ENCODE measurements at regions of chr2 and their contacts with region 1.

Region 1: DNA sequence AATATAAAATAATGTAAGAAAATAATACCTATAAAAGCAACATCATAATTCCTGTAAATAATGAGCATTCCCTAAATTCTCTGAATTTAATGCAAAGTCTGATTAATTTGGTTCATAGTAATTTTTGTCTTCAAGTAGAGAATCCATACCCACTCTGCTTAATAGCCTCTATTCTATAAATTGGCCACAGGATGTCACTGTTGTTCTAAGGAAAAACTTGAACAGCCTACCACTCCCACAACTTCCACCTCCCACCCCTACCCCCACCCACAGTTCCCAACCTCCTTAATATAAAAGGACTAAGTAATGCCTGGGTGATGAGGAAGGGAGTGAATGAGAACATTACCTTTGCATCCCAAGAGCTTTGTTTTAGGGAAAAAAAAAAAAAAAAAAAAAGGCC is 27.2 kb upstream of the BBS5 start:
- DNase-seq: peak; percentile 39
- H3K4me3 ChIP-seq: no peak overlapping the region
- H3K27ac ChIP-seq: no peak overlapping the region
- H3K4me1 ChIP-seq: no peaks in the 10 kb centered on the region
- H3K27me3 ChIP-seq: no peaks in the 10 kb centered on the region
- CTCF ChIP-seq: peak in 1 of 2 donors; percentile 22
- POLR2A ChIP-seq: no peak

Region 2: DNA sequence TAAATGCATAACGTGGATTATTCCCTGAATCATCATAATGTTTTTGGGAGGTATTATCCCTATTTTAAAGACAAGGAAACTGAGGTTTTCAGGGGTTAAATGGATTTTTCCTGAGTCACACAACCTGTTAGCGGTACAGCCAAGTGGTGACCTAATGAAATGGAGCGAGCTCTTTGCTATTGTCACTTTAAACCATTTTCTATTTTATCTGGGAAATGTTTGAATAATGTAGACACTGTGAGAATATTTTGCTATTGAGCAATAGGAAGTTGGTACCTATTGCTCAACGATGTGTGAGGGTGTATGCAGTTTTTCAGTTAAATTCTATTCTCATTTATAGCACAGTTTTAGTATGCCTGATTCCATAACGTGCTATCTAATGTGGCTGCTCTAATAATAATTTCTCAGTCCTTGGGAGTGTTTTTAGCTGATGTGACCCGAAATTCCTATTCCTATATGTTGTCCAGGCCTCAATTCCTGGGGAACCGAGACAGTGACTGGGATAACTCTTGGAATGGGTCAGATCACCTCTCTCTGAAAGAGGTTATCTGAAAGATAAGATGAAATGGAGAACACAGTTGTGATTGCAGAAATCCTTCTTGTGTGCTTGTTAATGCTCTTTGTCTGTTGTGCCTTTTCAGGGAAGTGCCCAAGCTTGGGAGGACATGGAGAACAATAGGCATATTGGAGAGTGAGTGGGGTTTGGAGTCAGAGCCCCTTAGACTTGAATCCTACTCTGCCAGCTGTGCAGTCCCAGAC is 459.3 kb before region 1 on chr2:
- CTCF ChIA-PET with region 1: no interaction called
- POLR2A ChIA-PET with region 1: no interaction called
- dilution Hi-C with region 1: no loop called
- intact Hi-C with region 1: no loop called
- DNase-seq: peak; percentile 73
- H3K4me3 ChIP-seq: no peak overlapping the region
- H3K27ac ChIP-seq: peak overlapping the region; percentile 90
- H3K4me1 ChIP-seq: peaks cover 63% of the 10 kb centered on the region
- H3K27me3 ChIP-seq: no peaks in the 10 kb centered on the region
- CTCF ChIP-seq: no peak
- POLR2A ChIP-seq: no peak

Region 3: DNA sequence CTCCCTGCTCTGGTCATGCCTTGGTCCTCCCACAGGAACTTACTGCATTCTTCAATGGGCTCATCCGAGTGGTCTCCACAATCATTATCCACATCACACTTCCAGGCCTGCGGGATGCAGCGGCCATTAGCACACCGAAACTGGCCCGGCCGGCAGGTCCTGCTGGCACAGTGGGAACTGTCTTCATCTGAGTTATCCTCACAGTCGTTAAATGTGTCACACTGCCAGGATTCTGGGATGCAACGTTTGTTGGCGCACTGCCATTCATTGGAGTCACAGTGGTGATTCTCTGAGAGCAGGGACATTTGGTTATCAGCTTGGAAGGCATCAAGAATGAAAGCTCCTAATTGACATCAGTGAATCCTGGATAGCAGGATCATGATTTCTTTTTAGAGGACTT is 278.2 kb before region 1 on chr2:
- CTCF ChIA-PET with region 1: no interaction called
- POLR2A ChIA-PET with region 1: no interaction called
- dilution Hi-C with region 1: no loop called
- intact Hi-C with region 1: no loop called
- DNase-seq: no peak
- H3K4me3 ChIP-seq: no peak overlapping the region
- H3K27ac ChIP-seq: no peak overlapping the region
- H3K4me1 ChIP-seq: no peaks in the 10 kb centered on the region
- H3K27me3 ChIP-seq: peaks cover 8 to 11% of the 10 kb centered on the region in 2 experiments
- CTCF ChIP-seq: no peak
- POLR2A ChIP-seq: no peak

Region 4: GRCh38 chr2:169363560-169364150 is 88.4 kb before region 1 on chr2:
- CTCF ChIA-PET with region 1: no interaction called
- POLR2A ChIA-PET with region 1: no interaction called
- dilution Hi-C with region 1: no loop called
- intact Hi-C with region 1: no loop called
- DNase-seq: peak; percentile 6
- H3K4me3 ChIP-seq: peak overlapping the region in 1 of 3 experiments; percentile 25
- H3K27ac ChIP-seq: no peak overlapping the region
- H3K4me1 ChIP-seq: peaks cover 35% of the 10 kb centered on the region
- H3K27me3 ChIP-seq: peaks cover 32 to 53% of the 10 kb centered on the region in 2 experiments
- CTCF ChIP-seq: no peak
- POLR2A ChIP-seq: no peak

Region 5: GRCh38 chr2:169462896-169463695 is 11.0 kb after region 1 on chr2:
- CTCF ChIA-PET with region 1: interaction called, 26 read pairs
- POLR2A ChIA-PET with region 1: no interaction called
- dilution Hi-C with region 1: no loop called
- intact Hi-C with region 1: no loop called
- DNase-seq: peak; percentile 68
- H3K4me3 ChIP-seq: no peak overlapping the region
- H3K27ac ChIP-seq: no peak overlapping the region
- H3K4me1 ChIP-seq: no peaks in the 10 kb centered on the region
- H3K27me3 ChIP-seq: no peaks in the 10 kb centered on the region
- CTCF ChIP-seq: no peak
- POLR2A ChIP-seq: no peak

Region 6: DNA sequence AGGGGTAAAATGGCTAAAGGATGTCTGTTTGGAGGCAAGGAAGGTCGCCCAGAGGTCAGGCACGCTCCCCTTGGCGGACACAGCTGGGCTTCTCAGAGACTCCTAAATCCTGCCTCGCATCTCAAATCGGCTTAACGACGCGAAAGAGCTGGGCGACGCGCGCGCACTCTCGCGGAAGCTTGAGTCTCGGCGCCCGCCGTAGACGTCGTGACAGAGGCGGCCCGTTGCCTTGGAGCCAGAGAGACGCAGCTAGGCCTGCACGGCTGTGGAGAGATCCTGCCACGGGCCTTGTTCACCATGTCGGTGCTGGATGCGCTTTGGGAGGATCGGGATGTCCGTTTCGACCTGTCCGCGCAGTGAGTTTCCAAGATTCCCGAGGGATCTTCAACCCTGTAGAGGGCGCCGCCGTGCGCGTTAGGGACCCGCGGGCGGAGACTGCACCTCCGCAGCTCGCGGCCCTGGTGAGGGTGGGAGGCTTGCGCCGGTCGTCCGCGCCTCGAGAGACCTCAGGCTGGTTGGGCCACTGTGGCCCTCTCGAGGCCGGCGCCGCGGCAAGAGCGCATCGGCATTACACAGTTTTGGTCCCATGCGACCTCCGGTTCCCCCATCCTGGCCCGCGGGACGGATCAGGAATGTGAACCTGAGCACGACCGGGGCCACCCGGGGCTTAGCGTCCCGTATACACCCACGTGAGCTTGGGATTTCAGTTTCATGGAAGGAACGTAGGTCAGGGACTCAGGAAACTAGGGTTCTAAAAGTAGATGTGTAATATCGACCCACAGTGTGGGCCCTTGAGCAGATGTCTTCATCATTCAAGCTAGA is 27.4 kb after region 1 on chr2 and contains the start of gene BBS5:
- CTCF ChIA-PET with region 1: interaction called, 10 read pairs
- POLR2A ChIA-PET with region 1: no interaction called
- dilution Hi-C with region 1: no loop called
- intact Hi-C with region 1: no loop called
- DNase-seq: peak; percentile 87
- H3K4me3 ChIP-seq: peak within 1 kb of the TSS; percentile 47 to 82 (median 70)
- H3K27ac ChIP-seq: peak within 1 kb of the TSS; percentile 66
- H3K4me1 ChIP-seq: peaks cover 17% of the 10 kb centered on the region
- H3K27me3 ChIP-seq: no peaks in the 10 kb centered on the region
- CTCF ChIP-seq: peak; percentile 55 to 64
- POLR2A ChIP-seq: peak; percentile 31
- total RNA-seq, gene BBS5: 4.1 and 5.6 TPM in 2 replicates

Region 7: GRCh38 chr2:169528271-169528701 is 76.2 kb after region 1 on chr2:
- CTCF ChIA-PET with region 1: no interaction called
- POLR2A ChIA-PET with region 1: no interaction called
- dilution Hi-C with region 1: no loop called
- intact Hi-C with region 1: loop called (anchors 1 kb)
- DNase-seq: peak; percentile 68
- H3K4me3 ChIP-seq: no peak overlapping the region
- H3K27ac ChIP-seq: no peak overlapping the region
- H3K4me1 ChIP-seq: no peaks in the 10 kb centered on the region
- H3K27me3 ChIP-seq: no peaks in the 10 kb centered on the region
- CTCF ChIP-seq: peak; percentile 76 to 80
- POLR2A ChIP-seq: no peak

Region 8: DNA sequence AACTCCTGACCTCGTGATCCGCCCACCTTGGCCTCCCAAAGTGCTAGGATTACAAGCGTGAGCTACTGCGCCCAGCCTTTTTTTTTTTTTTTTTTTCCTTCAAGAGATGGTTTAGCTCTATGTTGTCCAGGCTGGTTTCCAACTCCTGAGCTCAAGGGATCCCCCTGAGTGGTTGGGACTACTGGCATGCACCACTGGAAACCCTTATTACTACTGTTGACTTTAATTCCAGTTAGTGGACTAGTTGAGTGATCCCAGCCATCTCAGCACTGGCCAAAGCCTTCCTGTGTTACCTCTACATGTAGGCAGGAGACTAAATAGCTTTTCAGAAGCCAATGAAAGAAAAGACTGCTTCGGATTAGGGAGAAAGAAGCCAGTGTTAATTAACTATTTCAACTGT is 338.5 kb after region 1 on chr2:
- CTCF ChIA-PET with region 1: interaction called, 29 read pairs
- POLR2A ChIA-PET with region 1: no interaction called
- dilution Hi-C with region 1: no loop called
- intact Hi-C with region 1: loop called (anchors 1 kb)
- DNase-seq: no peak
- H3K4me3 ChIP-seq: no peak overlapping the region
- H3K27ac ChIP-seq: no peak overlapping the region
- H3K4me1 ChIP-seq: peaks cover 3% of the 10 kb centered on the region
- H3K27me3 ChIP-seq: peaks cover 0 to 3% of the 10 kb centered on the region in 2 experiments
- CTCF ChIP-seq: no peak
- POLR2A ChIP-seq: no peak

Region 9: DNA sequence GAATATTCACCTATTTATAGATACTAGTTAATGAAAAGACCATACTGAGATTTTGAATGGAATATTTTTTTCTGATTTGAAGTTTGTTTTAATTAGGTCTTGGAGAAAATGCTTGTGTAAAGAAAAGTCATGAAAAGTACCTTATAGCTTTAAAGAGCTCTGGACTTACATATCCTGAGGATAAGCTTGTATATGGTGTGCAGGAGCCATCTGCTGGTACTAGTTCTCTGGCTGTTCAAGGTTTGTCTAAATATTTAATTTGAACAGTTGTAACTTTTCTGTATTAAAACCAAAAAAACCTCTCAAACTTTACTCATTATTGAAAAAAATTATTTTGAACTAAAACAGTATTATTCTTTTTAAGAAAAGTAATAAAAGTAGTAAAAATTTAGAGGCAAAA is 425.3 kb after region 1 on chr2:
- CTCF ChIA-PET with region 1: interaction called, 14 read pairs
- POLR2A ChIA-PET with region 1: interaction called, 3 read pairs
- dilution Hi-C with region 1: no loop called
- intact Hi-C with region 1: no loop called
- DNase-seq: peak; percentile 31
- H3K4me3 ChIP-seq: no peak overlapping the region
- H3K27ac ChIP-seq: no peak overlapping the region
- H3K4me1 ChIP-seq: no peaks in the 10 kb centered on the region
- H3K27me3 ChIP-seq: no peaks in the 10 kb centered on the region
- CTCF ChIP-seq: peak in 1 of 2 donors; percentile 17
- POLR2A ChIP-seq: no peak

Region 10: GRCh38 chr2:170180031-170180566 is 728.0 kb after region 1 on chr2:
- CTCF ChIA-PET with region 1: no interaction called
- POLR2A ChIA-PET with region 1: no interaction called
- dilution Hi-C with region 1: no loop called
- intact Hi-C with region 1: no loop called
- DNase-seq: no peak
- H3K4me3 ChIP-seq: no peak overlapping the region
- H3K27ac ChIP-seq: no peak overlapping the region
- H3K4me1 ChIP-seq: no peaks in the 10 kb centered on the region
- H3K27me3 ChIP-seq: no peaks in the 10 kb centered on the region
- CTCF ChIP-seq: no peak
- POLR2A ChIP-seq: no peak

Region 11: GRCh38 chr2:170369894-170370293 is 917.8 kb after region 1 on chr2:
- CTCF ChIA-PET with region 1: interaction called, 10 read pairs
- POLR2A ChIA-PET with region 1: no interaction called
- dilution Hi-C with region 1: no loop called
- intact Hi-C with region 1: no loop called
- DNase-seq: peak; percentile 42
- H3K4me3 ChIP-seq: no peak overlapping the region
- H3K27ac ChIP-seq: no peak overlapping the region
- H3K4me1 ChIP-seq: no peaks in the 10 kb centered on the region
- H3K27me3 ChIP-seq: peaks cover 45 to 58% of the 10 kb centered on the region in 2 experiments
- CTCF ChIP-seq: no peak
- POLR2A ChIP-seq: no peak